ENCODE measurements at regions of chr2 and their contacts with region 1.

Region 1: GRCh38 chr2:100262555-100263320 is 59.6 kb downstream of the LONRF2 start:
- DNase-seq: peak; percentile 68
- H3K4me3 ChIP-seq: peak overlapping the region; percentile 22
- H3K27ac ChIP-seq: no peak overlapping the region
- H3K27me3 ChIP-seq: no peaks in the 10 kb centered on the region
- CTCF ChIP-seq: peak; percentile 98

Region 2: GRCh38 chr2:100136310-100136709 is 126.4 kb before region 1 on chr2:
- in situ Hi-C with region 1: no loop called
- DNase-seq: no peak
- H3K4me3 ChIP-seq: no peak overlapping the region
- H3K27ac ChIP-seq: no peak overlapping the region
- H3K27me3 ChIP-seq: no peaks in the 10 kb centered on the region
- CTCF ChIP-seq: no peak

Region 3: DNA sequence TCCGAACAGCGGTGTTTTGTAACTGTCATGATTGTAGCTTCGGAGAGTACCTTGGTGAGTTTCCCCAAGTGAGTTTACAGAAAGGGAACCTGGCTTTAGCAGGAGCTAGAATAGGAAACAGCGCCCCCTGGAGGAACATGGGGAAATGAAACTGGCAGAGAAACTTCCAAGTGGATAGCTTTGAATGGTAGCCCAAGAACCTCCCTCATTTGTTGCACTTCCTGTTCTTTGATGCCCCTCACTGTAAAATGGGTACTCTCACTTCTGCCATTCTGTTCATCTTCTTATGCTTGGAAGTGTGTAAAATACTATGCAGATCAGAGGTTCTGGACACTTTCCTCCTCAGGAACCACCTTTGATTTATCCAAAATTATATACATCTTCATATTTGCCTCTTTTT is 118.5 kb after region 1 on chr2:
- in situ Hi-C with region 1: loop called (anchors 25 kb)
- DNase-seq: peak; percentile 71
- H3K4me3 ChIP-seq: no peak overlapping the region
- H3K27ac ChIP-seq: no peak overlapping the region
- H3K27me3 ChIP-seq: no peaks in the 10 kb centered on the region
- CTCF ChIP-seq: peak; percentile 94

Measured in brain microvascular endothelial cell (primary cell).